ENCODE measurements at regions of chr20 and their contacts with region 1.

Region 1: GRCh38 chr20:21291026-21291425 is 12.1 kb upstream of the XRN2 start:
- DNase-seq: no peak
- ATAC-seq: no peak
- H3K4me3 ChIP-seq: no peak overlapping the region
- H3K27ac ChIP-seq: no peak overlapping the region
- H3K4me1 ChIP-seq: peaks cover 0 to 3% (median 0%) of the 10 kb centered on the region in 12 donors
- H3K27me3 ChIP-seq: peaks cover 0 to 20% (median 0%) of the 10 kb centered on the region in 9 donors
- CTCF ChIP-seq: no peak
- POLR2A ChIP-seq: no peak

Region 2: GRCh38 chr20:21387528-21387927 is 96.5 kb after region 1 on chr20:
- intact Hi-C with region 1: loop called in 1 of 10 experiments (anchors 10 kb)
- DNase-seq: no peak
- ATAC-seq: no peak
- H3K4me3 ChIP-seq: no peak overlapping the region
- H3K27ac ChIP-seq: no peak overlapping the region
- H3K4me1 ChIP-seq: peaks cover 0 to 7% (median 0%) of the 10 kb centered on the region in 12 donors
- H3K27me3 ChIP-seq: peaks cover 3 to 20% (median 15%) of the 10 kb centered on the region in 9 donors
- CTCF ChIP-seq: no peak
- POLR2A ChIP-seq: no peak

Measured in heart left ventricle (tissue), 16 donors.